Ascending aorta (tissue), 2 donors: ENCODE measurements at regions of chr2 and their contacts with region 1.

Region 1: GRCh38 chr2:55268907-55269644 is at the start of gene MTIF2:
- DNase-seq: peak; percentile 77 to 97
- H3K4me3 ChIP-seq: peak within 1 kb of the TSS; percentile 80 to 86
- H3K27ac ChIP-seq: peak within 1 kb of the TSS; percentile 80 to 83
- H3K4me1 ChIP-seq: peaks cover 0 to 4% of the 10 kb centered on the region in 2 donors
- H3K27me3 ChIP-seq: no peaks in the 10 kb centered on the region
- CTCF ChIP-seq: no peak
- total RNA-seq, gene MTIF2: 15.2 TPM

Region 2: DNA sequence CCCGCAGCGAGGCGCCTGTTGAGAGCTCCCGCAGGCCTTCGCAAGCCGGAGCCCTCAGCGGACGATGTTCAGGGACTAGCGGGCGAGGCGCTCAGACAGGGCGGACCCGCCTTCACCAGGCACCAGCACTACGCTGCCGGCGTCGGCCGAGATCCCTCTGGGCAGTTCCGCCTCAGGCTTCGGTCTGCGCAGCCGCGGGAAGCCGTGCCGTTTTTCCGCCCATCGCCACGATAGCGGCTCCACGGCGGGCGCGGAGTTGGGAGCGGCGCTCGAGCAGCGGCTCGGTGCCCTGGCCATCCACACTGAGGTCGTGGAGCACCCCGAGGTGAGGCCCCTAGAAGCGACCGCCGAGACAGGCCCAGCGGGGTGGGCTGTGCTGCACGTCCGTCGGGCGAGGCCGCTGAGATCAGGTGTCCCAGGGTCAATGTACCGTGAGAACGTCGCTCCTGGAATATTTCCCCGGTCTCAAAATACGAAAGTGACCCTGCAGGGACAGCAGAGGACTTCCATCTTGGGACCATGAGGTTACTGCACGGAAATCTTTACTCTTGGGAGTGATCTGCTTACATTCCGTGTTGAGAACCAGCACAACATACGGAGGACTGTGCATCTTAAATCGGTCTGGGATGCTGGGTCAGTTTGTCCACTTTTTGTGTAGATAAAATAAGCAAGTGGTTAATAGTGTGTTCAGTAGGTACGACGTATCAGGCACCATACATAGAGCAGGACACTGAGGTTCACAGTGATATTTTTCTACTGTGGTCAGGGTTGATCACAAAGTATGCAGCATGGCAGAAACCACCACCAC is 13.2 kb after region 1 on chr2:
- intact Hi-C with region 1: loop called (anchors 1 kb)
- DNase-seq: peak; percentile 43 to 92
- H3K4me3 ChIP-seq: peak overlapping the region; percentile 81 to 87
- H3K27ac ChIP-seq: peak overlapping the region; percentile 92
- H3K4me1 ChIP-seq: peaks cover 0 to 9% of the 10 kb centered on the region in 2 donors
- H3K27me3 ChIP-seq: no peaks in the 10 kb centered on the region
- CTCF ChIP-seq: no peak

Region 3: GRCh38 chr2:55419679-55420438 is 150.8 kb after region 1 on chr2 and contains the start of gene CCDC88A:
- intact Hi-C with region 1: loop called (anchors 1 kb)
- DNase-seq: peak; percentile 84 to 97
- H3K4me3 ChIP-seq: peak within 1 kb of the TSS; percentile 83 to 92
- H3K27ac ChIP-seq: peak within 1 kb of the TSS; percentile 85 to 92
- H3K4me1 ChIP-seq: peaks cover 0 to 8% of the 10 kb centered on the region in 2 donors
- H3K27me3 ChIP-seq: no peaks in the 10 kb centered on the region
- CTCF ChIP-seq: peak; percentile 28 to 39 (median 29)
- total RNA-seq, gene CCDC88A: 39.2 TPM

Region 4: GRCh38 chr2:55431982-55432627 is 163.0 kb after region 1 on chr2:
- intact Hi-C with region 1: loop called (anchors 2 kb)
- DNase-seq: no peak
- H3K4me3 ChIP-seq: no peak overlapping the region
- H3K27ac ChIP-seq: no peak overlapping the region
- H3K4me1 ChIP-seq: no peaks in the 10 kb centered on the region
- H3K27me3 ChIP-seq: no peaks in the 10 kb centered on the region
- CTCF ChIP-seq: peak; percentile 50 to 73 (median 66)